Posterior cingulate gyrus (tissue), 11 donors: ENCODE measurements at regions of chr2 and their contacts with region 1.

Region 1: DNA sequence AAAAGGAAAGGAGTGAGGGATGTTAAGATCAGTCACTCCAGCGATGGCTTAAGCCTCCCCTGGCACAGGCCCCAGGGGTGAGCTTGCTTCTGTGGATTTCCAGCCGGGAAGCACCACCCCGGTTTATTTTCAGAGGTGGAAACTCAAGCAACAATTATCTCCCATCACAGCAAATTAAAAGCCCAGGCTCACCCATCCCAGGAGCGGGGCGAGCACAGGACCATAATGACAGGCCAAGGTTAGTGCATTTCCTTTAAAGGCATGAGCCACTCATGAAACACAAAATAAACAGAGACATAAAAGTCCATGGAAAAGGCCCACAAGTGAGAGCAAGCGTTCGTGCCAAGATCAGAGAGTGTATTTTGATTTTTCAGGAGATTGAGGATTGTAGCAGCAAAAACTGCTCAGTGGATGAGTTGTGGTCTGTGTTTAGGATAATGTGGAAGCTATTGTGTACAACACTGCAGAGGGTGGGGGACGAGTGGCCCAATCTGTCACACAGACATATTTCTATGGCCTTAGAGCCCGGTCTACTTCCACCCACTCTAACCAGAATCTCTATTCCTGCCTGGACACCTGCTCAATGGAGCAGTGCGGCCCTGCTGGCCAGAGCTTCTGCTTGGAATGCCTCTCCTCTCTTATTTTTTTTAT is 111.4 kb upstream of the CDC42EP3 start:
- DNase-seq: no peak

Region 2: GRCh38 chr2:37523814-37524362 is 259.0 kb before region 1 on chr2:
- intact Hi-C with region 1: no loop called
- DNase-seq: no peak

Region 3: DNA sequence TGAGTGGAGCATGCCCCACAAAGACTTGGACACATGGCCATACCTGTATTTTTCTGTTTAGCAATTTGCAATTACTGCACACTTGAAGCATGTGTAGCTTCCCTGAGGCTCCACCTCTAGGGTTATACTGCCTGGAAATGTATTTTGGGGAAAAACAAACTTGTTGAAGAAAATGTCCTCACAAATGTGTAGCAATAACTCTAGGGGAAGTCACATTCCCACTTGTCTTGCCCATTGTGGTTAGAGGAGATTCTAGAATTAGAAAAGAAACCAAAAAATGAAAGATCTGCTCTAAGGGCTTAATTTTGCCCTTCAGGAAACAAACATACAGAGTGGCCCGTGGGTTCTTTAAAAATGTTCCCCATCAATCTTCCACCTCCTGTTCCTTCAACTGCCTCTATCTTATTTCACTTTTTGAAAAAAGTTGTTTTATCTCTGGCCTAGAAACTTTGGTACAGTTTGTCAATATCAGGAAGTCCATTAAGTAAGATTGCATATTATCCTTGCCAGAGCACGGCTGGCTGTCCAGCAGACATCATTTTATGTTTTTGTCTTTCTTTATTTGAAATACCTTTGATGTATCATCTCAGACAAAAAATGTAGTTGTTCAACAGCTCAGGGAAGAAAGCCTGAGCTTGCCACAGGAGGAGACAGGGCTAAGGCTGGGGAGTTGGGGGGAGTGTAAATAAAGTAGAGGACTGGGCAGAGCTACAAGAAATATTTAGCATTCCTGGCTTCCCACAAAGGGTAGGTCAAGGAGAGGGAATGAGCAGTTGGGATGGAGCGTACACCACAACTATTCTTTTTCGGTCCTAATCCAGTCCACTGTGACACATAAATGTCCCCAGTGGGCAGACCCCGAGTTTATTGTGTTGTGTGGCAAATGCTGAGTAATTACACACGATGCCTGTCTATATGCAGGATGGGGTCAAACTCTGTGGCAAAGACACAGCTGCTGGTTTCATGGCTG is 14.6 kb before region 1 on chr2:
- intact Hi-C with region 1: loop called (anchors 2 kb)
- DNase-seq: no peak